H1 (cell line): ENCODE measurements at regions of chr16 and their contacts with region 1.

Region 1: DNA sequence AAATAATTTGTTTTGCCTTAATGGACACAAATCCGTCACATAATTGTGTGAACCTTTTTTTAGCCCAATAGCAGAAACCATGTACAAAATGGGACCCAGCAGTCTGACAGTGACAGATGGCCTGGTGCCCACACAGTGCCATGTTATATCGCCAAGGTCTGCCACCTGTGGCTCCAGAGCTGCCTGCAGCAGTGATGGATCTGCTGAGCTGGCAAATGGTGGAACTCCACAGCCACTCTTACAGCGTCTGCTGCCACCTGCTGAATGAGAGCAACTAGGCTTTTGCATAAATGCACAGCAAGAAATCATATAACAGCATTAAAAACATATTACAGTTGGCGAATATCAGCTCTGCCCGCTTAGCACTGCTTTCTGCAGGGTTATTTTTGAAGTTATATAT is 59.4 kb downstream of the NUP93 start:
- DNase-seq: no peak
- H3K4me3 ChIP-seq: no peak overlapping the region
- H3K27ac ChIP-seq: no peak overlapping the region
- H3K4me1 ChIP-seq: peaks cover 8 to 25% (median 21%) of the 10 kb centered on the region in 4 experiments
- H3K27me3 ChIP-seq: no peaks in the 10 kb centered on the region
- CTCF ChIP-seq: peak; percentile 12 to 32 (median 29); a peak in 3 of 4 replicates
- EP300 ChIP-seq: no peak
- POLR2A ChIP-seq: no peak
- RAD21 ChIP-seq: peak; percentile 41 to 59

Region 2: GRCh38 chr16:56611281-56611833 is 178.0 kb before region 1 on chr16:
- CTCF ChIA-PET with region 1: no interaction called
- POLR2A ChIA-PET with region 1: no interaction called
- DNase-seq: no peak
- H3K4me3 ChIP-seq: no peak overlapping the region
- H3K27ac ChIP-seq: no peak overlapping the region
- H3K4me1 ChIP-seq: peaks cover 7 to 21% (median 10%) of the 10 kb centered on the region in 4 experiments
- H3K27me3 ChIP-seq: peaks cover 27 to 75% (median 67%) of the 10 kb centered on the region in 4 experiments
- CTCF ChIP-seq: no peak
- EP300 ChIP-seq: no peak
- POLR2A ChIP-seq: no peak
- RAD21 ChIP-seq: no peak

Region 3: DNA sequence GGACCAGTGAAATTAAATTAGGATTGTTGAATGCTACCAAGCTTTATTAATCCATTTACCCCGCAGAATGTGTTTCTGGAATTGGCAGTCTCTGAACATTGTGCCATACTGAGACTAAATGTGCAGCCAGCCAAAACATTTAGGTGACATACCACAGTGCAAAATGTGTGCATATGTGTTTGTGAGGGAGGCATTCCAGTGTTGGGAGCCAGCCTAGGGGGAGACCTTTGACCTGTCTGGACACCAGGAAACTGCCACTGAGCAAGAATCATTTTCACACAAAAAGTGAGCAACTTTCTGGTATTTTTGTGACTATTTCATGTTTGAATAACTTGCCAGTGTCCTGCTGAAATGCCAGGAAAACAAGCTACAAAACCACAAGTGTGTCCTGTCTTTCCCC is 11.0 kb after region 1 on chr16:
- CTCF ChIA-PET with region 1: interaction called, 16 read pairs
- POLR2A ChIA-PET with region 1: interaction called, 5 read pairs
- DNase-seq: no peak
- H3K4me3 ChIP-seq: no peak overlapping the region
- H3K27ac ChIP-seq: no peak overlapping the region
- H3K4me1 ChIP-seq: peaks cover 0 to 2% (median 0%) of the 10 kb centered on the region in 4 experiments; a peak in 1 of 7 replicates
- H3K27me3 ChIP-seq: no peaks in the 10 kb centered on the region
- CTCF ChIP-seq: no peak
- EP300 ChIP-seq: no peak
- POLR2A ChIP-seq: no peak
- RAD21 ChIP-seq: no peak

Region 4: GRCh38 chr16:56836410-56837230 is 47.3 kb after region 1 on chr16:
- CTCF ChIA-PET with region 1: interaction called, 12 read pairs
- POLR2A ChIA-PET with region 1: no interaction called
- DNase-seq: no peak
- H3K4me3 ChIP-seq: no peak overlapping the region
- H3K27ac ChIP-seq: no peak overlapping the region
- H3K4me1 ChIP-seq: no peaks in the 10 kb centered on the region
- H3K27me3 ChIP-seq: no peaks in the 10 kb centered on the region; a peak in 1 of 7 replicates
- CTCF ChIP-seq: no peak
- EP300 ChIP-seq: no peak
- POLR2A ChIP-seq: no peak
- RAD21 ChIP-seq: no peak

Region 5: GRCh38 chr16:56851671-56852400 is 62.5 kb after region 1 on chr16:
- CTCF ChIA-PET with region 1: interaction called, 14 read pairs
- POLR2A ChIA-PET with region 1: no interaction called
- DNase-seq: peak in 1 of 2 experiments; percentile 29
- H3K4me3 ChIP-seq: no peak overlapping the region
- H3K27ac ChIP-seq: no peak overlapping the region
- H3K4me1 ChIP-seq: peaks cover 2 to 11% (median 7%) of the 10 kb centered on the region in 4 experiments; a peak in 5 of 7 replicates
- H3K27me3 ChIP-seq: no peaks in the 10 kb centered on the region
- CTCF ChIP-seq: peak in 2 of 3 experiments; percentile 48 to 69; a peak in 3 of 4 replicates
- EP300 ChIP-seq: no peak
- POLR2A ChIP-seq: no peak
- RAD21 ChIP-seq: peak; percentile 45

Region 6: GRCh38 chr16:57000271-57001025 is 211.1 kb after region 1 on chr16:
- CTCF ChIA-PET with region 1: no interaction called
- POLR2A ChIA-PET with region 1: no interaction called
- DNase-seq: no peak
- H3K4me3 ChIP-seq: no peak overlapping the region
- H3K27ac ChIP-seq: no peak overlapping the region
- H3K4me1 ChIP-seq: peaks cover 0 to 11% (median 6%) of the 10 kb centered on the region in 4 experiments; a peak in 4 of 7 replicates
- H3K27me3 ChIP-seq: no peaks in the 10 kb centered on the region; a peak in 1 of 7 replicates
- CTCF ChIP-seq: no peak
- EP300 ChIP-seq: no peak
- POLR2A ChIP-seq: no peak
- RAD21 ChIP-seq: no peak